Heart left ventricle (tissue), 16 donors: ENCODE measurements at regions of chr6 and their contacts with region 1.

Region 1: GRCh38 chr6:20212392-20213217 is at the start of gene MBOAT1:
- DNase-seq: peak; percentile 93 to 97 (median 96)
- ATAC-seq: peak; percentile 97 to 99 (median 98)
- H3K4me3 ChIP-seq: peak within 1 kb of the TSS; percentile 42 to 97 (median 82)
- H3K27ac ChIP-seq: peak within 1 kb of the TSS; percentile 82 to 96 (median 89)
- H3K4me1 ChIP-seq: peaks cover 5 to 62% (median 23%) of the 10 kb centered on the region in 12 donors
- H3K27me3 ChIP-seq: no peaks in the 10 kb centered on the region
- CTCF ChIP-seq: peak in 5 of 12 donors; percentile 28 to 48 (median 31)
- POLR2A ChIP-seq: peak in 1 of 2 donors; percentile 79
- total RNA-seq, gene MBOAT1: 2.6 to 14.4 (median 4.3) TPM

Region 2: DNA sequence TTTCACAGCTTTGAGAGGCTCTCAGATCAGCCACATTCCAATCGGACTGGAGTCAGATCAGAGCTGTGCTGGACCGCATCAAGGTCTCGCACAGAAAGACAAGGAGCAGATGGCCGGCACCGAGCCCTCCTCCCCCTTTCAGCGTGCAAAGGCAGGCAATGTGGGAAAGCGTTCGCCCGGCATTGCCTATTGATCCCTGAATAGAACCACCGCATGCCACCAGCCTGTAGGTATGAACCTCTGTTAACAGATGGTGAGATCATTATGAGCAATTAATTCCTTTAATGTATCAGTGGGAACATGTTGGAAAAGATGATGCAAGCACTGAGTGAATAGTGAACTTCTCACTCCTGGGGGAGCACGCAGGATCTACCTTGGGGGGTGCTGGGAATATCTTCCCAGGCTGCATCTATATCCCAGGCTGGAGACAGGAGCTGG is 492.9 kb before region 1 on chr6:
- intact Hi-C with region 1: no loop called
- DNase-seq: peak in 1 of 5 donors; percentile 58
- ATAC-seq: no peak
- H3K4me3 ChIP-seq: no peak overlapping the region
- H3K27ac ChIP-seq: no peak overlapping the region
- H3K4me1 ChIP-seq: peaks cover 0 to 8% (median 0%) of the 10 kb centered on the region in 12 donors
- H3K27me3 ChIP-seq: peaks cover 0 to 5% (median 0%) of the 10 kb centered on the region in 9 donors
- CTCF ChIP-seq: no peak
- POLR2A ChIP-seq: no peak

Region 3: DNA sequence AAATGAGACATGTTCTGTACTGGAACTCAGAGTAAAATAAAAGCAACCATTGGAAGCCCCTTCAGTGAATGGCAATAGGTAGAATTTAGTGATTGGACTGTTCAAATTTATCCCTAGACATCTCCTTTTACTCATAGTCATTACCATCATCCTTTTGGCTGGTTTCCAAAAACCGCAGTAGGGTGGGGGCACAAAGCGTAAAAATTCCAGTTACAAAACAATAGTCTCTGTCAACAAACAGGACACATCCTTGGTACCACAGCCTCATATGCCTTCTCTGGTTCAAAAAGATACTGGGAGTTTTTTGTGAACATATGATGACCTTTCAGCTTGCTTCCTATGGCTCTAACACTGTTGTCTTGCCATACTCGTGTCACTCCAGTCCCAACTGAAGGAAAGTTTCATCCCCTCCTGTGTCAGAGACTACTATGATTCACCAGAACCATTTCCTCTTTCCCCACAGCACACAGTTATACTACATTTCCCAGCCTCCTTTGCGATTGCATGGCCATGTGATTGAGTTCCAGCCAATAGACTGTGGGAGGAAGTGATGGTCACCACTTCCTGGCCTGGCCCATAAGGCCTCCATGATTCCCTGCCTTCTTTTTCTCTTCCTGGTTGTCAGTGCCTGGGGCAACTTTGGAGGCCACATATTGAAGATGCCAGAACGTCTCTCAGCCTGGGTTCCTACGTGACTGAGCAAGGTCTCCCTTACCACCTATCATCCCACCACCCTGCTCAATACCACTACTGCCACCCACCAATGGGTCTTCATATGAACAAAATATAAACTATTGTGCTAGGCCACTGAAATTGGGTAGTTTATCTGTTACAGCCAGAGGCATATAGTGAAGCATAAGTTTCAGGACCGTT is 213.1 kb before region 1 on chr6:
- intact Hi-C with region 1: no loop called
- DNase-seq: no peak
- ATAC-seq: no peak
- H3K4me3 ChIP-seq: no peak overlapping the region
- H3K27ac ChIP-seq: no peak overlapping the region
- H3K4me1 ChIP-seq: no peaks in the 10 kb centered on the region
- H3K27me3 ChIP-seq: peaks cover 0 to 18% (median 0%) of the 10 kb centered on the region in 9 donors
- CTCF ChIP-seq: no peak
- POLR2A ChIP-seq: no peak

Region 4: DNA sequence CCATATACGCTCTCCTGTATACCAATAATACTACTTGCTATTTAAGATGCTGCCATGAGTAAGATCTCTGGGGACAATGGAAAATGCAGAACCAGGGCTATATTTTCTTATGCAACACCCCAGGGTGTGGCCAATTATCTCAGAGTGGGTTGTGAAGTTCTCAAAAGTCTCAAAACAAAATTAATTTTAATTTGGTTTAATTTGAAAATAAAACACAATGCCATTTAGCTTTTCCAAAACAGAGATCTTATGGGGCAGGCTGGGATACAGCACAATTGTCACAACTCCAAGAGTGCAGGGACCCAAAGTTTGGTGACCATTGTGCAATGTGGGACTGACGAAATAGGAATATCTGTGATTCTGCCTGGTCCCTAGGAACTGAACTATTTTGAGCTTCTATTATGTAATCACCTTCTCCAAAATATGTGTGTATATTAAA is 43.5 kb before region 1 on chr6:
- intact Hi-C with region 1: loop called in 1 of 10 experiments (anchors 5 kb)
- DNase-seq: peak in 2 of 5 donors; percentile 28 to 32
- ATAC-seq: peak; percentile 63 to 86 (median 78)
- H3K4me3 ChIP-seq: no peak overlapping the region
- H3K27ac ChIP-seq: peak overlapping the region in 10 of 12 donors; percentile 26 to 64 (median 47)
- H3K4me1 ChIP-seq: peaks cover 0 to 48% (median 12%) of the 10 kb centered on the region in 12 donors
- H3K27me3 ChIP-seq: no peaks in the 10 kb centered on the region
- CTCF ChIP-seq: no peak
- POLR2A ChIP-seq: no peak

Region 5: GRCh38 chr6:20302702-20303251 is 90.2 kb after region 1 on chr6:
- intact Hi-C with region 1: no loop called
- DNase-seq: no peak
- ATAC-seq: no peak
- H3K4me3 ChIP-seq: no peak overlapping the region
- H3K27ac ChIP-seq: no peak overlapping the region
- H3K4me1 ChIP-seq: no peaks in the 10 kb centered on the region
- H3K27me3 ChIP-seq: peaks cover 0 to 7% (median 0%) of the 10 kb centered on the region in 9 donors
- CTCF ChIP-seq: no peak
- POLR2A ChIP-seq: no peak

Region 6: GRCh38 chr6:20377623-20378265 is 165.1 kb after region 1 on chr6:
- intact Hi-C with region 1: no loop called
- DNase-seq: no peak
- ATAC-seq: no peak
- H3K4me3 ChIP-seq: no peak overlapping the region
- H3K27ac ChIP-seq: no peak overlapping the region
- H3K4me1 ChIP-seq: no peaks in the 10 kb centered on the region
- H3K27me3 ChIP-seq: no peaks in the 10 kb centered on the region
- CTCF ChIP-seq: no peak
- POLR2A ChIP-seq: no peak